Spleen (tissue), 13 donors: ENCODE measurements at regions of chr5 and their contacts with region 1.

Region 1: GRCh38 chr5:100731768-100732167 is 171.3 kb downstream of the ST8SIA4 start:
- DNase-seq: no peak
- H3K4me3 ChIP-seq: peak overlapping the region in 5 of 8 donors; percentile 12 to 54 (median 15)
- H3K27ac ChIP-seq: peak overlapping the region in 6 of 8 donors; percentile 3 to 56 (median 28)
- H3K4me1 ChIP-seq: peaks cover 0 to 16% (median 4%) of the 10 kb centered on the region in 6 donors
- H3K27me3 ChIP-seq: no peaks in the 10 kb centered on the region
- CTCF ChIP-seq: no peak
- POLR2A ChIP-seq: no peak

Region 2: GRCh38 chr5:100840384-100840783 is 108.6 kb after region 1 on chr5:
- intact Hi-C with region 1: loop called (anchors 10 kb)
- DNase-seq: no peak
- H3K4me3 ChIP-seq: no peak overlapping the region
- H3K27ac ChIP-seq: peak overlapping the region in 7 of 8 donors; percentile 64 to 76 (median 68)
- H3K4me1 ChIP-seq: peaks cover 29 to 72% (median 59%) of the 10 kb centered on the region in 6 donors
- H3K27me3 ChIP-seq: no peaks in the 10 kb centered on the region
- CTCF ChIP-seq: peak in 2 of 11 experiments; percentile 10 to 15
- POLR2A ChIP-seq: no peak

Region 3: DNA sequence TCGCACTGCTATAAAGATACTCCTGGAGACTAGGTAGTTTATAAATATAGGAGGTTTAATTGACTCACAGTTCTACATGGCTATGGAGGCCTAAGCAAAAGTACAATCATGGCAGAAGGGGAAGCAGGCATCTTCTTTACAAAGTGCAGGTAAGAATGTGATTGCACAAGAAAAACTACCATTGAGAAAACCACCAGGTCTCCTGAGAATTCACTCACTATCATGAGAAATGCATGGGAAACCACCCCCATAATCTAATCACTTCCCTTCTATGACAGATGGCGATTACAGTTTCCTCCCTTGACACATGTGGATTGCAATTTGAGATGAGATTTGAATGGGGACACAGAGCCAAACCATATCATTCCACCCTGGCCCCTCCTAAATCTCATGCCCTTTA is 292.5 kb after region 1 on chr5:
- intact Hi-C with region 1: no loop called
- DNase-seq: no peak
- H3K4me3 ChIP-seq: no peak overlapping the region
- H3K27ac ChIP-seq: no peak overlapping the region
- H3K4me1 ChIP-seq: no peaks in the 10 kb centered on the region
- H3K27me3 ChIP-seq: no peaks in the 10 kb centered on the region
- CTCF ChIP-seq: no peak
- POLR2A ChIP-seq: no peak